ENCODE measurements at regions of chr19 and their contacts with region 1.

Region 1: DNA sequence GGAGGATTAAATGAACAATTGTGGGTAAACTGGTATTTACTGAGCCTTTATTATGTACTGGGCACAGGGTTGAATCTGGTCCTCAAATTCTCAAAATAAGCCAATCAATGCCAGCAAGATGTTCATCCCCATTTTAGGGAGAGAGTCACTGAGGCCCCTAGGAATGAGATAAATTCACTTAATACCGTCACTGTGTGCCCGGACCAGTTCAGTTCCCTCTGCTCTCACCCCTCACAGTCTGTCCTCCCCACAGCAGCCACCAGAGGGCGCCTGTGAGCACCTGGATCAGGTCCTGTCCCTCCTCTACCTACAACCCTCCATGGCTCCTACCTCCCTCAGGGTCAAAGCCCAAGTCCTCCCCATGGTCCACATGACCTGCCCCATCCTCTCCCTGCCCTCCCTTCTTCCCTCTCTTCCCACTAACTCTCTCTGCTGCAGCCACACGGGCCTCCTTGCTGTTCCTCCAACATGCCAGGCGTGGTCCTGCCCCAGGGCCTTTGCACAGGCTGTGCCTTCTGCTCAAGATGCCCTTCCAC is 42.0 kb upstream of the NFIC start:
- DNase-seq: peak; percentile 78
- H3K4me3 ChIP-seq: no peak overlapping the region
- H3K27ac ChIP-seq: no peak overlapping the region
- H3K4me1 ChIP-seq: no peaks in the 10 kb centered on the region
- H3K27me3 ChIP-seq: no peaks in the 10 kb centered on the region
- CTCF ChIP-seq: peak; percentile 58

Region 2: DNA sequence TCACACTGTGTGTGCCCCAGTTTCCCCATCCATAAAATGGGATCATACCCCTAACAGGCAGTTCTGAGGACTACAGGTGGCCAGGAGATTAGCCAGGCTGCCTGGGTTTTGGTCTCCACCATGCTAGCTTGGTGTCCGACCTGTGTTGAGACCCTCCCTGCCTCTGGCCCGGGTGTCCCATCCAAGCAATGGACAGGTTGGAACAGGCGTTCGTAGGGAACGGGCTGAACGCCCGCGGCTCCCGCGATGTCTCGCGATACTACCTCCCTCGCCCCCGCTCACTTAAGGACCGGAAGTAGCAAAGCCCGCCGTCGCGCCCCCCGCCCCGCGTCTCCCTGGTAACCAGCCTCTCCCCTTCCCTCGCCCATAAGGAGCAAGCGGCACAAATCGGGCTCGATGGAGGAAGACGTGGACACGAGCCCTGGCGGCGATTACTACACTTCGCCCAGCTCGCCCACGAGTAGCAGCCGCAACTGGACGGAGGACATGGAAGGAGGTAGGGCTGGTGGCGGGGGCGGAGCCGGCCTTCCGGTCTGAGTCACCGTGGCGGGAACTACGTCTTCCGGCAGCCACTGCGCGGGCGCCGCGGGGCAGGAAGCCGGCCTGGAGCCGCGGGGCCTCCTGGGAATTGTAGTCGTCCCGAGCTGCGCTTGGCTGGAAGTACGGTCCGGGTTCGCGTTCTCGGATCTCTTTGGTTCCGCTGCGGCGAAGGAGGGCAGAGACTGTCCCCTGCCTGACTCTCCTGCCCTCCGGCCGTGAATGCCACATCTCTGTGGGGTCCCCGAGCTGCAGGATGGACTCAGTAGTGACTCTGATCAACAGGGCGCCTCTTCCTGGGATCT is 110.5 kb after region 1 on chr19:
- intact Hi-C with region 1: loop called (anchors 2 kb)
- DNase-seq: peak; percentile 94
- H3K4me3 ChIP-seq: peak overlapping the region; percentile 62
- H3K27ac ChIP-seq: peak overlapping the region; percentile 89
- H3K4me1 ChIP-seq: peaks cover 6% of the 10 kb centered on the region
- H3K27me3 ChIP-seq: no peaks in the 10 kb centered on the region
- CTCF ChIP-seq: no peak

Region 3: DNA sequence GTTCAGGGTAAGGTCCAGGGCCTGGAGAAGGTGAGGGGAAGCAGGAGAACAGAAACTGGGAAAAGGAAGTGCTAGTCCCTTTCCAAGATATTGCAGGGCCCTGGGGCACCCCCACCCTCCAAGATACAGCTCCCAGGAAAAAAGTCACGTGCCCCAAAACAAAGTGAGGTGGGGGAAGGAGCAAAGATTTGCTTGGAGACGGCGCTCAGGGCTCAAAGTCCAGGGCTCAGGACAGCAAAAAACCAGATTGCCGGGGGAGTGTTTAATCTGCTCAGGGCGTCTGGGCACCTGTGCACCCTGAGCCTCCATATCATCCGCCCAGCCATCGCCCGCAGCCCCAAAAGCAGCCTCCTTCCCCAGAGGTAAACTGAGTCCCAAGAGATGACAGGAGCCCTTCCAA is 149.6 kb after region 1 on chr19:
- intact Hi-C with region 1: loop called (anchors 2 kb)
- DNase-seq: peak; percentile 80
- H3K4me3 ChIP-seq: no peak overlapping the region
- H3K27ac ChIP-seq: no peak overlapping the region
- H3K4me1 ChIP-seq: no peaks in the 10 kb centered on the region
- H3K27me3 ChIP-seq: no peaks in the 10 kb centered on the region
- CTCF ChIP-seq: no peak

Region 4: GRCh38 chr19:3586124-3586626 is 261.8 kb after region 1 on chr19:
- intact Hi-C with region 1: no loop called
- DNase-seq: no peak
- H3K4me3 ChIP-seq: no peak overlapping the region
- H3K27ac ChIP-seq: no peak overlapping the region
- H3K4me1 ChIP-seq: no peaks in the 10 kb centered on the region
- H3K27me3 ChIP-seq: peaks cover 10% of the 10 kb centered on the region
- CTCF ChIP-seq: no peak

Measured in colonic mucosa (tissue), 4 donors.